GM12878 (cell line): ENCODE measurements at regions of chr10 and their contacts with region 1.

Region 1: DNA sequence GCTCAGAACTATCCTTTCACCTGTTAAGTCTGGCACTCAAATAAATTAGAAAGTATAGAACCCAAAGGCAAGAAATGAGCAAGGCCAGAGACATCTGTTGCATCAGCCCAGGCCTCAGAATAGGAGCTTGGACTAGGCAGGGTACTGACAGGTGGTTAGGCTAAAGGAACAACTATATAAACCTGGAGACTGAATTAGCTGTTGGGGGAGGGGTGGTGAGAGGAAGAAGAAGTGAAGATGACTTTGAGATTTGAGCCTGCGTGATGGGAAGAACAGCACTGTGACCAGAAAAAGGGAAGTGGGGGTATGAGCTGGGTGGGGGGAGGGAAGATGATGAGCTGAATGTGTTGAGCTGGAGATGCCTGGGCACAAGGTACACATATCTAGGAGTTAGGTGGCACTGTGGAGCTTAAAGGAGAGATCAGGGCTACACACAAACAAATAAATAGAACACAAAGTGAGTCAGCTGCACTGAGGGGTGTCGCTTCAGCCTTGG is 244.7 kb downstream of the PTEN start:
- DNase-seq: peak; percentile 94
- ATAC-seq: peak; percentile 56
- H3K4me3 ChIP-seq: no peak overlapping the region
- H3K27ac ChIP-seq: peak overlapping the region; percentile 92
- H3K4me1 ChIP-seq: peaks cover 92% of the 10 kb centered on the region
- H3K27me3 ChIP-seq: no peaks in the 10 kb centered on the region
- CTCF ChIP-seq: peak; percentile 39 to 46 (median 45); a peak in 5 of 6 replicates
- EP300 ChIP-seq: peak; percentile 69 to 76; a peak in 2 of 4 replicates
- POLR2A ChIP-seq: no peak
- RAD21 ChIP-seq: peak; percentile 41; the same call in 1 of the 2 replicates

Region 2: GRCh38 chr10:88157981-88158465 is 49.9 kb after region 1 on chr10:
- CTCF ChIA-PET with region 1: no interaction called
- POLR2A ChIA-PET with region 1: no interaction called
- RAD21 ChIA-PET with region 1: no interaction called
- SMC1A ChIA-PET with region 1: no interaction called
- in situ Hi-C with region 1: no loop called
- intact Hi-C with region 1: no loop called
- DNase-seq: no peak
- ATAC-seq: no peak
- H3K4me3 ChIP-seq: no peak overlapping the region
- H3K27ac ChIP-seq: no peak overlapping the region
- H3K4me1 ChIP-seq: peaks cover 7% of the 10 kb centered on the region
- H3K27me3 ChIP-seq: no peaks in the 10 kb centered on the region
- CTCF ChIP-seq: no peak
- EP300 ChIP-seq: no peak
- POLR2A ChIP-seq: no peak
- RAD21 ChIP-seq: no peak

Region 3: DNA sequence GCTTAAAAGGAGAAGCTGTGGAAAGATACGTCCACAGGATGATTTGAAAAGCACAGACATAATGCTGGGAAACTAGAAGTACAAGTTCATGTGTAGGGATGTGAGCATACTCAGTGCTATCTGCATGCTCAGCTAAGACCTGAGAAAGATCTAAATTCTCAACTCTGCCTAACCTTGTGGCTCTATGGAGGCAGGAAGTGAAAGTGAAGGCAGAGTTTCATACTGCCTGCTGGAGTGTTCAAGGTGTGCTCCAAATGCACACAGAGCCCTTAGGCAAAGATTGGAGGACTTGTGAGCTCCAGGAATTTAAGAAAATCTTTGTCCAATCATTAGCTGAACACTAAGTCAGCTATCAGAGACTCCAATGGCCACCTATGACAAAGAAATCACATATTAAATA is 284.1 kb after region 1 on chr10:
- CTCF ChIA-PET with region 1: interaction called, 51 read pairs
- POLR2A ChIA-PET with region 1: interaction called, 3 read pairs
- RAD21 ChIA-PET with region 1: interaction called, 102 read pairs
- SMC1A ChIA-PET with region 1: interaction called, 192 read pairs
- in situ Hi-C with region 1: no loop called
- intact Hi-C with region 1: loop called (anchors 2 kb)
- DNase-seq: peak; percentile 80
- ATAC-seq: peak; percentile 95
- H3K4me3 ChIP-seq: peak overlapping the region; percentile 28; the same call in 1 of the 2 replicates
- H3K27ac ChIP-seq: peak overlapping the region; percentile 82
- H3K4me1 ChIP-seq: peaks cover 46% of the 10 kb centered on the region
- H3K27me3 ChIP-seq: no peaks in the 10 kb centered on the region
- CTCF ChIP-seq: no peak
- EP300 ChIP-seq: no peak
- POLR2A ChIP-seq: 0 out of 2 replicates have a peak, but pooled peaks have one; percentile 30
- RAD21 ChIP-seq: peak; percentile 26